PC-9 (cell line): ENCODE measurements at regions of chr6 and their contacts with region 1.

Region 1: GRCh38 chr6:37169496-37170272 is at the start of gene PIM1:
- DNase-seq: peak; percentile 90 to 95
- H3K4me3 ChIP-seq: peak within 1 kb of the TSS; percentile 64
- H3K27ac ChIP-seq: peak within 1 kb of the TSS; percentile 97
- H3K4me1 ChIP-seq: peaks cover 42% of the 10 kb centered on the region
- H3K27me3 ChIP-seq: no peaks in the 10 kb centered on the region
- CTCF ChIP-seq: no peak
- total RNA-seq, gene PIM1: 51.0 and 60.3 TPM in 2 replicates

Region 2: DNA sequence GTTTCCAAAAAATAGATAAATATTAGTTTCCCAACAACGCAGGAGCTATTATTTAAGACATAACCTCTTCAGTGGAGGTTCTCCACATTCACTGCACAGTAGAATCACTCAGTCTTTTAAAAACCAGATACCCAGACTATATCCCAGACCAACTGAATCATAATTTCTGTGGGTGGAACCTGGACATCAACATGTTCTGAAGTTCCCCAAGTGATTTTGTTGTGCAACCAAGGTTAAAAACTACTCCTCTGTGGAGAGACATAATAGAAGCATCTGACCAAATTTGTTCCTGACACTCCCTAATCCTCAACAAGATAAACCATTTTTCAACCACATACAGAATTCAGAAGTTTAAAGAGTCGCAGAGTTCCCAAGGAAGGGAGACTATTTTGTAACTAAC is 664.7 kb before region 1 on chr6:
- CTCF ChIA-PET with region 1: no interaction called
- POLR2A ChIA-PET with region 1: no interaction called
- intact Hi-C with region 1: no loop called
- DNase-seq: no peak
- H3K4me3 ChIP-seq: no peak overlapping the region
- H3K27ac ChIP-seq: no peak overlapping the region
- H3K4me1 ChIP-seq: peaks cover 13% of the 10 kb centered on the region
- H3K27me3 ChIP-seq: no peaks in the 10 kb centered on the region
- CTCF ChIP-seq: no peak

Region 3: DNA sequence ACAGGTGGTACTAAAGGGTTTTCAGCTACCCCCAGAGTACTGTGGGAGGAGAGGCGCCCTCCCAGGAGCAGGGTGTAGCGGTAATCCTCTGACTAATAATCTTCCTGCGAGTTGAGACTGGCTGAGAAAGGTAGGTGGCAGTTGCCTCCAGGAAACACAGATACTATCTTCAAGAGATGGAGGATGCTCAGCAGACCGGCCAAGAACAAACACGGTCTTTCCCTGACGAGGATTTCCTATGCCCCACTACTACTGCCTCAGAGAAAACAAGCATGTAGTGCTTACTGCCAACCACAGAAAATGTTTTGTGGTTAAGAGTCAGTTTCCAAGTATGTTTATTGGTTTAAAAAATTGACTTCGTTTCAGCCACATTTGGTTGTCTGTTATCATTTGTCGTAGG is 257.1 kb before region 1 on chr6:
- CTCF ChIA-PET with region 1: no interaction called
- POLR2A ChIA-PET with region 1: no interaction called
- intact Hi-C with region 1: no loop called
- DNase-seq: peak; percentile 37 to 89
- H3K4me3 ChIP-seq: no peak overlapping the region
- H3K27ac ChIP-seq: no peak overlapping the region
- H3K4me1 ChIP-seq: peaks cover 33% of the 10 kb centered on the region
- H3K27me3 ChIP-seq: no peaks in the 10 kb centered on the region
- CTCF ChIP-seq: no peak

Region 4: GRCh38 chr6:37029249-37029971 is 140.3 kb before region 1 on chr6:
- CTCF ChIA-PET with region 1: interaction called, 10 read pairs
- POLR2A ChIA-PET with region 1: interaction called, 9 read pairs
- intact Hi-C with region 1: loop called (anchors 1 kb)
- DNase-seq: peak; percentile 84 to 96
- H3K4me3 ChIP-seq: no peak overlapping the region
- H3K27ac ChIP-seq: peak overlapping the region; percentile 81
- H3K4me1 ChIP-seq: peaks cover 25% of the 10 kb centered on the region
- H3K27me3 ChIP-seq: no peaks in the 10 kb centered on the region
- CTCF ChIP-seq: peak; percentile 83

Region 5: DNA sequence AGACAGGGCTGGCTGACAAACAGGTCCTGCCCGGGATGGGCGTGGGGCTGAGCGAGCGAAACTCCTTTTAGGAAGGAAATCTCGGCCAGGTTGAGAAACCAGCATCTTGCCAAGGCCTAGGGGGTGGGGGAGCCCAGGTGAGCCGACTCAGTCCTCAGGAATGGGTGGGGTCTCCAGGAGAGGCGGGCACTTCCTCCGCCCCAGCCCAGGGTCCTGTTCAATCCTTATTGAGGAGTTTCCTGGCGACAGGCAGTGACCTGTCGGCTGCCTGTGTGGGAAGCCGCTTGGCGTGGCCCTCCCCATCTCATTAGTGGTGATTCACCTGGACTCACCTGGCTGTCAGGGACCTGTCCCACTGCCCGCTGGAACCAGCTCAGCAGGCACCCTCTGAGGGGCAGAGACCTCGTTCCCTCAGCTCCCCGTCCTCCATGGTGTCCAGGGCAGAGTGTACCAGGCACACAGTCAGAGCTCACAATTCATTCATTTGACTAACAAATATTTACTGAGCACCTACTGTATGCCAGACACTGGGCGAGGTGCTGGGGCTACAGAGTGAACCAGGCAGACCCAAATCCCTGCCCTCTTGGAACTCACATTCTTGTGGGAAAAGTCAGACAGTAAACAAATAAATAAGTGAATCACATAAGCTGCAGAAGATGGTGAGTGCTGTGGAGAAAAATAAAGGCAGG is 113.1 kb before region 1 on chr6:
- CTCF ChIA-PET with region 1: interaction called, 9 read pairs
- POLR2A ChIA-PET with region 1: interaction called, 4 read pairs
- intact Hi-C with region 1: loop called (anchors 1 kb)
- DNase-seq: peak; percentile 97
- H3K4me3 ChIP-seq: peak overlapping the region; percentile 48; the same call in 1 of the 2 replicates
- H3K27ac ChIP-seq: peak overlapping the region; percentile 100
- H3K4me1 ChIP-seq: peaks cover 87% of the 10 kb centered on the region
- H3K27me3 ChIP-seq: no peaks in the 10 kb centered on the region
- CTCF ChIP-seq: no peak

Region 6: GRCh38 chr6:37102279-37103168 is 67.2 kb before region 1 on chr6:
- CTCF ChIA-PET with region 1: interaction called, 3 read pairs
- POLR2A ChIA-PET with region 1: interaction called, 26 read pairs
- intact Hi-C with region 1: loop called (anchors 1 kb)
- DNase-seq: peak; percentile 77 to 87
- H3K4me3 ChIP-seq: peak overlapping the region; percentile 43; the same call in 1 of the 2 replicates
- H3K27ac ChIP-seq: peak overlapping the region; percentile 97
- H3K4me1 ChIP-seq: peaks cover 55% of the 10 kb centered on the region
- H3K27me3 ChIP-seq: no peaks in the 10 kb centered on the region
- CTCF ChIP-seq: no peak

Region 7: DNA sequence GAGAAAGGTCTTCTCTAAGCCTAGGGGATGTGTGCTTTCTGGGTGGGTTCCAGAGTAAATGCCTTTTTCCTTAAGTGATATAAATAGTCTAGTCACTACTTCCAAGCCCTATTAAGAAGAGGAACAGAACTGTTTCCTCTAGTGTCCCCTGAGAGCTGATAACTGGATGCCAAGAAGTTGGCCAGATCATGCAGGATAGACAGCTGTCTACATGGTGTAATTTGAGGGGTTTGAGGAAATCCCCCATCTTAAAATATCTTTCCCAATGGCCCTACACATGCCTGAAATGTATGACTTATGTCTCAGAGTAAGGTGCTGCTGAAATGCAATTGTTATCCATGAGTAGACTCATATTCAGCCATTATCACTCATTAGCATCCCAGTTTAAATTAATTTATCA is 19.9 kb before region 1 on chr6:
- CTCF ChIA-PET with region 1: no interaction called
- POLR2A ChIA-PET with region 1: interaction called, 11 read pairs
- intact Hi-C with region 1: no loop called
- DNase-seq: no peak
- H3K4me3 ChIP-seq: no peak overlapping the region
- H3K27ac ChIP-seq: no peak overlapping the region
- H3K4me1 ChIP-seq: peaks cover 4% of the 10 kb centered on the region
- H3K27me3 ChIP-seq: no peaks in the 10 kb centered on the region
- CTCF ChIP-seq: no peak

Region 8: GRCh38 chr6:37207903-37208456 is 38.3 kb after region 1 on chr6:
- CTCF ChIA-PET with region 1: interaction called, 7 read pairs
- POLR2A ChIA-PET with region 1: interaction called, 5 read pairs
- intact Hi-C with region 1: loop called (anchors 1 kb)
- DNase-seq: peak; percentile 68 to 84
- H3K4me3 ChIP-seq: no peak overlapping the region
- H3K27ac ChIP-seq: no peak overlapping the region
- H3K4me1 ChIP-seq: peaks cover 33% of the 10 kb centered on the region
- H3K27me3 ChIP-seq: no peaks in the 10 kb centered on the region
- CTCF ChIP-seq: peak; percentile 91